ENCODE measurements at regions of chr7 and their contacts with region 1.

Region 1: GRCh38 chr7:24381894-24382505 is 98.0 kb downstream of the NPY start:
- DNase-seq: no peak
- ATAC-seq: no peak

Region 2: DNA sequence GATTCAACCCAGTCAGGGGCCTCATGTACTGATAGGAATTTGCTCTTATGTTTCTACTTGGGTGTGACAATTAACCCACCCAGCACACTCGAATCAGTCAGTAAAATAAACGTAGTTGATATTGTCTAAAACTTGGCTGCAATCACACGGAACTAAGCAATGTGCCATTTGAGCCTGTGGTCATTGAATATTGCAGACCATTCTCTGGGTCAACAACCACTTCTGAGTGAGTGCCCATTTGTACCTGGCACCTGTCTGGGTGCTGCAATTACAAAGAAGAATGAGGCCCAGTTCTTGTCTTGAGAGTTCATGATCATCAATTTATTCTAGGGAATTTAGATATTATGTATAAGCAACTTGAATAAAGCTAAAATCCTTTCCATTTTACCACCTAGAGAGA is 68.2 kb before region 1 on chr7:
- intact Hi-C with region 1: loop called (anchors 2 kb)
- DNase-seq: no peak
- ATAC-seq: no peak

Region 3: DNA sequence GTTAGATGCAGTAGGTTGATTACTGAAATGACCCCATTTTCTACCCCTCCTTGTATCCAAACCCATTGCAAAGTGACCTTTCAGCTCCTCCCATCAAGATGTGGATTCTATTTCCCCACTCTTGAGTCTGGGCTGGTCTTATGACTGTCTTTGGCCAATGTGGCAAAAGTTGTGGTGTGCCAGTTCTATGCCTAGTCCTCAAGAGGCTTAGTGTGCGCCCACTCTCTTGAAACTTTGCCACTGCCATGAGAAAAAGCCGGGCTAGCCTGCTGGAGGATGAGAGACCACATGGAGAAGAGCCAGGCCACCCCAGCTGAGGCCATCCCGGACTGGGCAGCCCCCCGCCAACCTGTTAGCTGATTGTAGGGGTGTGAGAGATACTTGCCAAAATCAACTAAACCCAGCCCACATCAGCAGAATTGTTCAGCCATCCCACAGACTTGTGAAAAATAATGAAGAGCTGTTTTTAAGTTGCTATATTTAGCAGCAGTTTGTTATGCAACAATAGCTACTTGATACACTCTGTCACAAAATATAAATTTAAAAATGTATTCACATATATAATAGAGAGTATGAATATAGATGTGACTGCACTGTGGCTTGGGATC is 60.3 kb after region 1 on chr7:
- intact Hi-C with region 1: no loop called
- DNase-seq: no peak
- ATAC-seq: peak; percentile 20

Region 4: DNA sequence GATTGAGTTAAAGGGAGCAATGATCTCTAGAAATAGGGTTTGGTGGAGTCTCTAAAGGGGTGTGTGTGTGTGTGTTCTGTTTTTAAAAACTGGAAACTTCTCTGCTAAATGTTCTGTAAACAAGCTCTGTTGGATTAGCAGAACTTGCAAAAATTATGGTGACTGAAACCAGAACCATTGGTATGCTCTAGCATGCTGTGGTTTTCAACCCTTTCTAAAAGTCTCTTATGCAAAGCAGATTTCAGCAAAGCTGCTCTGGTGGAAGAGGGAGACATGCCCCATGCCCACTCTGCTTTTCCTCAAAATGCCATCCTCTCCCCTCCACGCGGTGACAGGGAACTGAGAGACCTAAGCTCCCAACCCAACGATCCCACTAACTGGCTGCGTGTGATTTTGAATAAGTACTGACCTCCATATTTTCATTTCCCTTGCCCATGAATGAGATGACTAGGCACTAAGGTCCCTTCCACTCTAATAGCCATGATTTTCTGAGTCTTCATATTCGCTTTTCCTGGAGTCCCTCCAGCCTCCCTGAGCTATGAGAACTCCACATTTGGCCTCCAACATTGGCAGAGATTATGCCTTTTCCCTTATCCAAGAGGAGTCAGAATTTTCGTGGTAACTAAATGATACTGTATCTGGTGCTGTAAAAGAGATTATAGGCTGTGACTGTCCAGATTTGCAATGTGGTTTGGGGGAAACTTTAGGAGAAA is 74.0 kb after region 1 on chr7:
- intact Hi-C with region 1: no loop called
- DNase-seq: no peak
- ATAC-seq: no peak